ENCODE measurements at regions of chr13 and their contacts with region 1.

Region 1: DNA sequence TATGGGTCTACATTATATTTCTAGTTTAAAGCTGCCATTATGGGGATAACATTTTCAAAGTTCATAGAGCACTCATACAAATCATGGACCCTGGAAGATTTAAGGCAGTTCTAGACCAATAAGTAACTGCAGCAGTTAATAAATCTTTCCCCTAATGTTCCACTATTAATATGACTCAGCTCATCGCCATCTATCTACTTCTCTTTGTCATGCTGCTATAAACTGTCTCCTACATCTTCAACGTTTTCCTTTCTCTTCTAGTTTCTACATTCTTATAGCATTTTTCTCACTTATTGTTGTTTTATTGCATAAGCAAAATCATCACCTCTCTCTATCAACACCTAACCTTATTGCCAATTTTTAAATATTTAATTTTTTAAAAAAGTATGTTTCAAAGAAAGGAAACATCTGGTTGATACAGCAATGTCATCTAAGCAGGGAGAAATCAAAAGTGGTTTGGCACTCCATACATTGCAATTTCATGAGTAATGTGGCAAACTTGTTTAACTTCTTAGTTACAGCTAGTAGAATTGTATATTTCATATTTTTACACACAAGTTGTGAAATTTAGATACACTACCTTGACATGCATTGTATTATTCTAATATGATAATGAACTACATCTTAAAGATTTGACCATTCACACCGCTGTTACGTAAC is 1500.4 kb upstream of the MIR17HG start:
- DNase-seq: no peak
- H3K4me3 ChIP-seq: no peak overlapping the region
- H3K27ac ChIP-seq: no peak overlapping the region
- H3K4me1 ChIP-seq: no peaks in the 10 kb centered on the region
- H3K27me3 ChIP-seq: no peaks in the 10 kb centered on the region
- CTCF ChIP-seq: no peak

Region 2: DNA sequence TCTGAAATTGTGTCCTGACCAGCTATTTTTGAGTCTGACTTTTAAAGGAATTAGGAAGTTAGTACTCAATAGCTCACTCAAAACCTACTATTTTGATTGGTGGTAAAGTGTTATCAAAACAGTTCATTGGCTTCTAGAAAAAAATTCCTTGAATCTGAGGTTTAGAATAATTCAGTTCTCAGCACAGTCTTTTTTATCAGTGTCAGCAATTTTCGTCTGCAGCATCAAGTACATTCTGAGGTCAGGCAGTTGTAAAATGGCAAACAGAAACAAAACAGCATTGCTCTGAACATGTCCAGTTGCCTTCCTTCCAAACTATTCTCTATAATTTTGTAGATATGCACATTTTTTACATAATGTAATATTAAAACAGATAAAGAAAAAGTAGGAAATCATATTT is 531.8 kb before region 1 on chr13:
- intact Hi-C with region 1: no loop called
- DNase-seq: no peak
- H3K4me3 ChIP-seq: no peak overlapping the region
- H3K27ac ChIP-seq: no peak overlapping the region
- H3K4me1 ChIP-seq: no peaks in the 10 kb centered on the region
- H3K27me3 ChIP-seq: no peaks in the 10 kb centered on the region
- CTCF ChIP-seq: no peak

Region 3: GRCh38 chr13:89796196-89796595 is 50.9 kb before region 1 on chr13:
- intact Hi-C with region 1: no loop called
- DNase-seq: no peak
- H3K4me3 ChIP-seq: no peak overlapping the region
- H3K27ac ChIP-seq: no peak overlapping the region
- H3K4me1 ChIP-seq: no peaks in the 10 kb centered on the region
- H3K27me3 ChIP-seq: no peaks in the 10 kb centered on the region
- CTCF ChIP-seq: no peak

Region 4: DNA sequence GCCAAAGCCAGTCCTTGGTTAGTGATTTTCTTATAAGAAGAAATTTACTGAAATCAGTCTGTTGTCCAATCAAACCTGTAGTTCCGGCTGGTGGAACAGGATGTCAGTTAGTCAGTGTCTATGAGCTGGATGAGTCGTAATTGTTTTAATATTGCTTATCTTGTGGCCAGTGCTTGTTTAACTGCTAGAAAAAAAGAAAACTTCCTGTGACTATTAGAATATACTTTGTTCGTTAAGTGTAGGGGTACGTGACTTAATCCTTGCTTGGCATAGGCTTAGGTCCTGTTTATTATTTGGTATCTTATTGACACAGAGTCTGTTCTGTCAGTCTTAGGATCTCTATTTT is 15.6 kb after region 1 on chr13:
- intact Hi-C with region 1: loop called (anchors 1 kb)
- DNase-seq: no peak
- H3K4me3 ChIP-seq: no peak overlapping the region
- H3K27ac ChIP-seq: no peak overlapping the region
- H3K4me1 ChIP-seq: no peaks in the 10 kb centered on the region
- H3K27me3 ChIP-seq: no peaks in the 10 kb centered on the region
- CTCF ChIP-seq: no peak